Prostate gland (tissue), 2 donors: ENCODE measurements at regions of chr16 and their contacts with region 1.

Region 1: DNA sequence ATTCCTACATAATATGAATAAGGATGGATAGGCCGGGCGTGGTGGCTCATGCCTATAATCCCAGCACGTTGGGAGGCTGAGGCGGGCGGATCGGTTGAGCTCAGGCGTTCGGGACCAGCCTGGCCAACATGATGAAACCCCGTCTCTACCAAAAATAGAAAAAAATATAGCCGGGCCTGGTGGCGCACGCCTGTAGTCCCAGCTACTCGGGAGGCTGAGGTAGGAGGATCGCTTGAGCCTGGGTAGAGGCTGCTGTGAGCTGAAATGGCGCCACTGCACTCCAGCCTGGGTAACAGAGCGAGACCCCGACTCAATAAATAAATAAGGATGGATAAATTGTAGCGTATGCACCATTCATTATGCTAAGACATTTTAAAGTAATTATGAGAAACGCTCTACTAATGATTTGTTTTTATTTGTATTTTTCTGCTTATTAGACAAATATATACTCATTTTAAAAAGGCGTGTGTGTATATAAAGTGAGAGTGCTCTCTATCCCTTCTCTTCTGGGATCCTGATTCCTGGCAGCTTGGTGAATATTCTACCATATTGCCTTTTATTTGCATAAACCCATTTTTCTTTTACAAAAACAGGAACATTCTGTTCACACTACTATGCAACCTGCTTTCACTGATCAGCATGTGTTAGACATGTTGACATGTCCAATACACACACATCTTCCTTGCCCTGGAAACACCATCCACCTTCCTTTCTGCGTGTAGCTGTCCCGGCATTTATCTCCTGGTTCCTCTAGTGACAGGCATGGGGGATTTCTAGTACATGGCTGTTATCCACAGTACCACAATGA is 26.4 kb downstream of the DDX19A start:
- DNase-seq: no peak
- H3K4me3 ChIP-seq: no peak overlapping the region
- H3K27ac ChIP-seq: no peak overlapping the region
- H3K4me1 ChIP-seq: no peaks in the 10 kb centered on the region
- H3K27me3 ChIP-seq: no peaks in the 10 kb centered on the region
- CTCF ChIP-seq: no peak
- POLR2A ChIP-seq: no peak

Region 2: GRCh38 chr16:69424053-69424934 is 948.8 kb before region 1 on chr16 and contains the start of gene CYB5B:
- intact Hi-C with region 1: no loop called
- DNase-seq: peak; percentile 95
- H3K4me3 ChIP-seq: peak within 1 kb of the TSS; percentile 56 to 70
- H3K27ac ChIP-seq: peak within 1 kb of the TSS; percentile 70 to 71
- H3K4me1 ChIP-seq: peaks cover 6% of the 10 kb centered on the region
- H3K27me3 ChIP-seq: no peaks in the 10 kb centered on the region
- CTCF ChIP-seq: peak in 1 of 4 experiments; percentile 21
- POLR2A ChIP-seq: peak; percentile 67
- total RNA-seq, gene CYB5B: 48.8 to 71.3 TPM

Region 3: DNA sequence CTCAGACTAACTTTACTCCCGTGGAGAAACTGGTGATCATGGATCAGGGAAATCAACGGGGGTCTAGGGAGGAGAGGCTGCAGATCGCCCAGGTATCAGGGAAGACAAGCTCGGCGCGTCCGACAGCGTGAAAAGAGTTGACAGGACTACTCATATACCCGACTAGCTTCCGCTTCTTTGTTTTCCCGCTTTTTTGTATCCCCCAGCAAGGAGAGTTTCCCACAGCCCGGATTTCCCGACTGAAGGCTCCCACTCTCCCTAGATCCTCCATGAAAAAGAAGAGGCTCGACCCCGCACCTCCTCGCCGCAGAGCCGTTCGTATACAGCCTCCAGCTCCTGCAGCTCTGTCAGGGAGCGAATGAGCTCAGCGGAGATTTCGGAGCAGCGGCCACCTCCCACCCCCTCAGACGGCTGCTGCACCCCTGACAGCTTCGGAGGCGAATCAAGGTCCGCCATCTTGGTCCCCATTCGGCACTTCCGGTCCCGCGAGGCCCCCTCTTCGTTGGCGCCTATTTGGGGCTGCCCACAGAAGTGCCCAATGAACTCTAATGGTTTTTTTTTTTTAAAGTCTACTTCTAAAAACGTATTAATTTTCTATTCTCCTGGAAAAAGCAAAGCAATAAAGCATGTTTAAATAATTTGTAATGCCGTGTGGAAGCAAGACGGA is 150.1 kb after region 1 on chr16 and contains the start of gene COG4:
- intact Hi-C with region 1: loop called (anchors 5 kb)
- DNase-seq: peak; percentile 77
- H3K4me3 ChIP-seq: peak within 1 kb of the TSS; percentile 63
- H3K27ac ChIP-seq: peak within 1 kb of the TSS; percentile 86 to 89
- H3K4me1 ChIP-seq: peaks cover 8% of the 10 kb centered on the region
- H3K27me3 ChIP-seq: no peaks in the 10 kb centered on the region
- CTCF ChIP-seq: peak in 1 of 4 experiments; percentile 2
- POLR2A ChIP-seq: peak; percentile 49
- total RNA-seq, gene COG4: 34.6 to 62.0 TPM

Region 4: GRCh38 chr16:70653809-70654771 is 281.0 kb after region 1 on chr16:
- intact Hi-C with region 1: loop called (anchors 5 kb)
- DNase-seq: peak; percentile 71
- H3K4me3 ChIP-seq: no peak overlapping the region
- H3K27ac ChIP-seq: no peak overlapping the region
- H3K4me1 ChIP-seq: no peaks in the 10 kb centered on the region
- H3K27me3 ChIP-seq: no peaks in the 10 kb centered on the region
- CTCF ChIP-seq: peak; percentile 71 to 93 (median 92)
- POLR2A ChIP-seq: no peak